Posterior vena cava (tissue), 2 donors: ENCODE measurements at regions of chr2 and their contacts with region 1.

Region 1: GRCh38 chr2:127640082-127641072 is 5.6 kb upstream of the GPR17 start:
- DNase-seq: no peak

Region 2: GRCh38 chr2:127526149-127527000 is 114.0 kb before region 1 on chr2 and contains the start of gene IWS1:
- intact Hi-C with region 1: loop called in 1 of 2 experiments (anchors 5 kb)
- DNase-seq: peak; percentile 99
- total RNA-seq, gene IWS1: 31.0 to 35.4 TPM